ENCODE measurements at regions of chr6 and their contacts with region 1.

Region 1: DNA sequence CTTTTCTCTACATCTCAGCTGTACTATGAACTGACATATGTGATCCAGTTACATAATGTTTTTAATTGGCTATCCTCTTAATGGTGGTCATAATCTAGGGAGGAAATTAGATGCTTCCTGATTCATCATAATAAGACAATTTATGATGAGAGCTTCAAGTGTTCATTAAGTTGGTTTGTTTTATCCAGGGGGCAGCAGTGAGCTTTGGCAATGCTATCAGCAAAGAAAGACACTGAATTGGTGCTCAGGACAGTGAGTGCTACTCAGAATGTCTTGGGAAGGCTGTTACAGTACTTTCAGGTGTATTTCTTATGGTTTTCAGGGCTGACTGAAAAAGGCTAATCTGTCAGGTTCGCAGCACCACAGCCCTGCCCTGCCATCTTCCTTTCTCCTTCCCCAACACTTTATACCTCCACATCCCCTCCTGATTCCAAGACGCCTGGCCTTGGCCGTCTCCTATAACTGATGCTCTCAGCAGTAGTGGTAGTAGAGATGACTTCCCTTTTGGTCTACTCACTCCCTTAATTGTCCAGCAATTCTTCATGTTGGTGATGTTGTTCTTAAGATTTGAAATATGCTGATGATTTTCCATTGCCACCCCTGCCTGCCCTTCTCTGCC is 67.0 kb upstream of the TNFAIP3 start:
- DNase-seq: no peak
- ATAC-seq: peak; percentile 96
- H3K4me3 ChIP-seq: no peak overlapping the region
- H3K27ac ChIP-seq: no peak overlapping the region
- H3K4me1 ChIP-seq: peaks cover 19% of the 10 kb centered on the region
- H3K27me3 ChIP-seq: no peaks in the 10 kb centered on the region
- CTCF ChIP-seq: peak; percentile 67 to 78 (median 70)
- EP300 ChIP-seq: no peak
- POLR2A ChIP-seq: no peak
- RAD21 ChIP-seq: peak; percentile 88

Region 2: GRCh38 chr6:137680705-137681346 is 119.2 kb before region 1 on chr6:
- CTCF ChIA-PET with region 1: no interaction called
- POLR2A ChIA-PET with region 1: no interaction called
- RAD21 ChIA-PET with region 1: no interaction called
- SMC1A ChIA-PET with region 1: no interaction called
- in situ Hi-C with region 1: no loop called
- intact Hi-C with region 1: no loop called
- DNase-seq: no peak
- ATAC-seq: peak; percentile 53
- H3K4me3 ChIP-seq: no peak overlapping the region
- H3K27ac ChIP-seq: no peak overlapping the region; the same call in 1 of the 2 replicates
- H3K4me1 ChIP-seq: peaks cover 27% of the 10 kb centered on the region
- H3K27me3 ChIP-seq: no peaks in the 10 kb centered on the region
- CTCF ChIP-seq: no peak
- EP300 ChIP-seq: no peak; a peak in 1 of 4 replicates
- POLR2A ChIP-seq: no peak
- RAD21 ChIP-seq: no peak

Region 3: DNA sequence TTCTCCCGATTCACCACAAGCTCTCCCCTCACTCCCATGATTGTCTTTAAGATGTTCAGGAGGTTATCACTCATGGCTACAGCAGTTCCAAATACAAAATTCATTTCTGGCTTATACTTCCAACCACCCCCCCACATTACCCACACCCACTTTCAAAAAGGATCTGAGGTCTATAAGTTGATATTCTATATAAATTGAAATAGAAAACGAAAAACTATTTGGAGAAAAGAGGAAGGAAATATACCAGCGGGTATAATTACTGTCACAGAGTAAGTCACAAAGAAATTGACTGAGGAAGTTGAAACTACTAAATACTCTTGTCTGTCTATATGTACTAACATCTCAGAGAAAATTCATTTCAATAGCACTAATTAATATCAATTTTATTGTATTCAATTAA is 45.7 kb before region 1 on chr6:
- CTCF ChIA-PET with region 1: interaction called, 9 read pairs
- POLR2A ChIA-PET with region 1: interaction called, 3 read pairs
- RAD21 ChIA-PET with region 1: interaction called, 6 read pairs
- SMC1A ChIA-PET with region 1: interaction called, 20 read pairs
- in situ Hi-C with region 1: no loop called
- intact Hi-C with region 1: no loop called
- DNase-seq: no peak
- ATAC-seq: peak; percentile 86
- H3K4me3 ChIP-seq: no peak overlapping the region
- H3K27ac ChIP-seq: peak overlapping the region; percentile 59
- H3K4me1 ChIP-seq: peaks cover 38% of the 10 kb centered on the region
- H3K27me3 ChIP-seq: no peaks in the 10 kb centered on the region
- CTCF ChIP-seq: no peak
- EP300 ChIP-seq: no peak
- POLR2A ChIP-seq: no peak
- RAD21 ChIP-seq: no peak

Region 4: DNA sequence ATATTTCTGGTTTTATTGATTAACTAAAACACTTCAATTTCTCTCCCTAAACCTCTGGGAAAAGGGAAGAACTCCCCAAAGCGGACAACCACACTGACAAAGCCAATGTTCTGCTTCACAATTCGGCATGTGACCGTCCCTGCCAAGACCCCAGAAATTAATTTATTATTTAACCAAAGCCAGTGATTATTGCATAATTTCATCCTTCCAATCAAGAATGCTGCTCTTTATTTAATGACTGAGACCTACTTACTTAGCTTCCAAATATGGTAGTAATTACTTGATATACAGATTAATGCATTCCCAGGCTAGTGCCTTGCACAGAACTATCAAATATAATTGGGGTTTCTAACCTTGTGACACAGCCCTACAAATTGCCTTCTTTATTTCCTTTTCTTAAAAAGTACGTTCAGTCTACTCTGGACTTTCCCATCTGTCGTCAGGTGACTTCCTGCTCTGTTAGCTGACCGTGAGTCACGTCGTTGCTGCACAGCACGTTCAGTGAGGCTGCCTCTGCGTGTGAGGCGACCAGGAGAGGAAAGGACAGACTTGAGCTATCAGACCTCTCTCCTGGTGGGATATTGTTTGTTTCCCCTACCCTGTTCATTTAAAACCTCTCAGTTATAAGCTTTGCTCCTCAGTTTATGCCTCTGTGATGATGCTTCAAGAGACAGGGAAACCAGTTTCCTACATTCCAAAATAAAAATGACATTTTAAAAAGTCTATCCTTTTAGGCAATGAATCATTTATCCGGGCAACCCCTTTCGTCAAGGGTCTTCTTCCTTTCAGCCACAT is 11.3 kb after region 1 on chr6:
- CTCF ChIA-PET with region 1: interaction called, 49 read pairs
- POLR2A ChIA-PET with region 1: interaction called, 35 read pairs
- RAD21 ChIA-PET with region 1: interaction called, 39 read pairs
- SMC1A ChIA-PET with region 1: interaction called, 69 read pairs
- in situ Hi-C with region 1: no loop called
- intact Hi-C with region 1: no loop called
- DNase-seq: peak; percentile 95
- ATAC-seq: peak; percentile 95
- H3K4me3 ChIP-seq: peak overlapping the region; percentile 20
- H3K27ac ChIP-seq: peak overlapping the region; percentile 89
- H3K4me1 ChIP-seq: peaks cover 31% of the 10 kb centered on the region
- H3K27me3 ChIP-seq: no peaks in the 10 kb centered on the region
- CTCF ChIP-seq: no peak
- EP300 ChIP-seq: peak in 1 of 2 experiments; percentile 72; a peak in 2 of 4 replicates
- POLR2A ChIP-seq: peak; percentile 88
- RAD21 ChIP-seq: no peak

Region 5: DNA sequence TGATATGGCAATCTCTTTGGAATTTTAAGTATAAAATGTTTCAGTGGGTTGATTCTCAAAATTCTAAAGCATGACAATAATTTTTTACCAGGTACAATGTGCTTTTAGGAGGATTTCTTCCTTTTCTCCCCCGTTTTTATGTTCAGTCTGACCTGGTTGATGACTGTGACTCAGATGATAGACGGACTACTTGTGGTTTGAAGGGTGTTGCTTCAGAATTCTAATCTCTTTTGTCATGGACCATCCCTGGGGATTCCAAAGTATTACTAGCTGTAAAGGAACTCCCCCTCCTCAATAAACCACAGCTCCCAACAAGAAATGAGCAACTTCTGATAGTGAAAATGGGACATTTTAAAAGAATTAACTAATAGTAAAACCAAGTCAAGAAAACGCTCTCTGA is 32.1 kb after region 1 on chr6:
- CTCF ChIA-PET with region 1: interaction called, 19 read pairs
- POLR2A ChIA-PET with region 1: interaction called, 3 read pairs
- RAD21 ChIA-PET with region 1: interaction called, 17 read pairs
- SMC1A ChIA-PET with region 1: interaction called, 86 read pairs
- in situ Hi-C with region 1: no loop called
- intact Hi-C with region 1: no loop called
- DNase-seq: no peak
- ATAC-seq: no peak
- H3K4me3 ChIP-seq: no peak overlapping the region
- H3K27ac ChIP-seq: no peak overlapping the region
- H3K4me1 ChIP-seq: peaks cover 42% of the 10 kb centered on the region
- H3K27me3 ChIP-seq: no peaks in the 10 kb centered on the region
- CTCF ChIP-seq: no peak
- EP300 ChIP-seq: no peak
- POLR2A ChIP-seq: no peak
- RAD21 ChIP-seq: no peak

Measured in GM12878 (cell line).